CD4-positive, alpha-beta T cell (primary cell): ENCODE measurements at regions of chr1 and their contacts with region 1.

Region 1: DNA sequence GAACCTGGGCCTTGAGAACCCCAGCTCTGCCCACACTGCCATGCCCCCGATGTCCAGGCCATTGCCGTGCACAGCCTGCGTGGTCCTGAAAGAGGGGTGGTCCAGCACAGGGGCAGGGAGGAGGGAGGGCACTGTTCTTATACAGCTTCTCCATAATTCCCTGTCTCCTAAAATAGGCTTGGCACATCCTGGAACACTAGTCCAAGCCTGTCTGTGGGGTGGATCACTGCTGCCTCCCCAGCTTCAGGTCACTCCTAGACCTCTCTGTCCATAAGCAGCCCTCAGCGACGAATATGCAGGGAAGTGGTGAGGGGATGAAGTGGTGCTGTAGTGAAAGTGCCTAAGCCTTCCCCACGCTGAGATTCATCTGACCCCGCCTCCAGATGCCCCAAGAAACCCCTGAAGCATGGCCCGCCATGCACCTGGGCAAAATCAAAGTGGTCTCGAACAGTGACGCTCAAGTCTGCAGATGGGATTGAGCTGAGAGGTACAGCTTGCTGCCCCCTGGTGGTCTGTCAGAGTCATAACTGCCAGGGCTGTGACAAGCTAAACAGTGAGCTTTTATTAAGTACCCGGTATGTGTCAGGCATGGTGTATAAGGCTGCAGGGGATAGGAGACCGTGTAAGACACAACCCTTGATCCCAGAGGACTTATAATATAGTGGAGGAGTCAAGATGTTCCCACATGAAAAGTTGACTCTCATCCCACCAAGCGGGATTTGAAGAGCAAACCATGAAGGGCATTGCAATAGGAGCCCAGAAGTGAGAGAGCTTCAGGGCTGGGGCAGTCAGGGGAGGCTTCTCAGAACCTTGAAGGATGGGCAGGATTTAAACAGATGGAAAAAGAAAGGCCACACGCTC is 66.6 kb downstream of the FAM163A start:
- DNase-seq: peak; percentile 52 to 89 (median 60)
- ATAC-seq: peak; percentile 80
- H3K4me3 ChIP-seq: no peak overlapping the region
- H3K4me3 Mint-ChIP-seq: no peak overlapping the region
- H3K27ac ChIP-seq: no peak overlapping the region
- H3K27ac Mint-ChIP-seq: peak overlapping the region; percentile 8
- H3K4me1 ChIP-seq: peaks cover 13% of the 10 kb centered on the region
- H3K4me1 Mint-ChIP-seq: peaks cover 9% of the 10 kb centered on the region
- H3K27me3 ChIP-seq: no peaks in the 10 kb centered on the region
- H3K27me3 Mint-ChIP-seq: peaks cover 5% of the 10 kb centered on the region
- CTCF ChIP-seq: peak; percentile 88

Region 2: DNA sequence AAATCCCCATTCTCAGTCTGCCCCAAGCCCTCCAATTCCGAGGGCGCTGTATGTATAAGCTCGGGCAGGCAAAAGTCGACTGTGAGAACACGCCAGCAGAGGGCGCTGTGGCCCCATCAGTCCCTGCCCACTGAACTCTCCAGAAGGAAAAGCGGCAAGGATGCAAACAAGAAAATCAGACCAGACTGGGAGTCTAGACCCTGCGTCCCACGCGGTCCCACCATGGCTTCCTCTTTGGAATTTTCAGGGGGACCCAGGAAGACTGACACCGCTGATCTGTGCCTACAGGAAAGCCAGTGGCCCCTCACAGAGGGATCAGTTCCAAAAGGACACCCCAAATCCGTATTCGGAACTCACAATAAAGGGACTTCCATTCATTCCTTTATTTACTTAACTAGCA is 1277.3 kb before region 1 on chr1:
- CTCF ChIA-PET with region 1: no interaction called
- POLR2A ChIA-PET with region 1: no interaction called
- intact Hi-C with region 1: loop called in 1 of 2 experiments (anchors 10 kb)
- DNase-seq: peak; percentile 49 to 86 (median 68)
- ATAC-seq: peak; percentile 75
- H3K4me3 ChIP-seq: no peak overlapping the region
- H3K4me3 Mint-ChIP-seq: no peak overlapping the region
- H3K27ac ChIP-seq: no peak overlapping the region
- H3K27ac Mint-ChIP-seq: no peak overlapping the region
- H3K4me1 ChIP-seq: peaks cover 7% of the 10 kb centered on the region
- H3K4me1 Mint-ChIP-seq: peaks cover 5% of the 10 kb centered on the region
- H3K27me3 ChIP-seq: no peaks in the 10 kb centered on the region
- H3K27me3 Mint-ChIP-seq: peaks cover 5% of the 10 kb centered on the region
- CTCF ChIP-seq: peak; percentile 95

Region 3: DNA sequence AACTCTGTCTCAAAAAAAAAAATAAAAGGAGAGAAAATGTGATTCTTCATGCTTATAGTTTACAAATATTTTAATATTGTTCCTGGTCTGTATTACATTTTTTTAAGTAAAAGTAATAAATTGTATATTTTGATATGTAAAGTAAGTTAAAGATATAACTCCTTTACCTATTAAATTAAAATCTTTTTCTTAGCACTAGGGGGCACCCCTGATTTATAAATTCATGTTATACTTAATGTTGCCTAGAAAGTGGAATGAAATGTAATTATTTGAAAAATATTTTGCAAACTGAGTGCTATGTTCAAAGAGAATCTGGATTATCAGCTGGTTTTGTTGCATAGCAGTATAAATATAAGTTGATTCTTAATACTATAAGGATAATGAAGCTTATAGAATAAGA is 1035.5 kb before region 1 on chr1:
- CTCF ChIA-PET with region 1: interaction called, 3 read pairs
- POLR2A ChIA-PET with region 1: no interaction called
- intact Hi-C with region 1: loop called in 1 of 2 experiments (anchors 5 kb)
- DNase-seq: peak in 3 of 14 experiments; percentile 22 to 42 (median 26)
- ATAC-seq: no peak
- H3K4me3 ChIP-seq: no peak overlapping the region
- H3K4me3 Mint-ChIP-seq: no peak overlapping the region
- H3K27ac ChIP-seq: no peak overlapping the region
- H3K27ac Mint-ChIP-seq: no peak overlapping the region
- H3K4me1 ChIP-seq: no peaks in the 10 kb centered on the region
- H3K4me1 Mint-ChIP-seq: no peaks in the 10 kb centered on the region
- H3K27me3 ChIP-seq: no peaks in the 10 kb centered on the region
- H3K27me3 Mint-ChIP-seq: no peaks in the 10 kb centered on the region
- CTCF ChIP-seq: peak; percentile 54

Region 4: GRCh38 chr1:179229214-179230140 is 580.3 kb before region 1 on chr1 and contains the start of gene ABL2:
- CTCF ChIA-PET with region 1: no interaction called
- POLR2A ChIA-PET with region 1: no interaction called
- intact Hi-C with region 1: loop called in 1 of 2 experiments (anchors 10 kb)
- DNase-seq: peak; percentile 11 to 74 (median 45)
- ATAC-seq: peak; percentile 63
- H3K4me3 ChIP-seq: peak within 1 kb of the TSS; percentile 57
- H3K4me3 Mint-ChIP-seq: peak within 1 kb of the TSS; percentile 98
- H3K27ac ChIP-seq: peak within 1 kb of the TSS in 1 of 2 donors; percentile 57
- H3K27ac Mint-ChIP-seq: peak within 1 kb of the TSS; percentile 82
- H3K4me1 ChIP-seq: peaks cover 11% of the 10 kb centered on the region
- H3K4me1 Mint-ChIP-seq: peaks cover 35% of the 10 kb centered on the region
- H3K27me3 ChIP-seq: no peaks in the 10 kb centered on the region
- H3K27me3 Mint-ChIP-seq: no peaks in the 10 kb centered on the region
- CTCF ChIP-seq: no peak
- total RNA-seq, gene ABL2: 15.8 to 16.4 TPM

Region 5: GRCh38 chr1:179706339-179706941 is 103.3 kb before region 1 on chr1:
- CTCF ChIA-PET with region 1: interaction called, 77 read pairs
- POLR2A ChIA-PET with region 1: interaction called, 18 read pairs
- intact Hi-C with region 1: loop called (anchors 1 kb)
- DNase-seq: peak; percentile 29 to 85 (median 54)
- ATAC-seq: no peak
- H3K4me3 ChIP-seq: no peak overlapping the region
- H3K4me3 Mint-ChIP-seq: no peak overlapping the region
- H3K27ac ChIP-seq: no peak overlapping the region
- H3K27ac Mint-ChIP-seq: peak overlapping the region; percentile 70
- H3K4me1 ChIP-seq: peaks cover 15% of the 10 kb centered on the region
- H3K4me1 Mint-ChIP-seq: peaks cover 25% of the 10 kb centered on the region
- H3K27me3 ChIP-seq: no peaks in the 10 kb centered on the region
- H3K27me3 Mint-ChIP-seq: no peaks in the 10 kb centered on the region
- CTCF ChIP-seq: peak; percentile 80

Region 6: GRCh38 chr1:179856296-179856695 is 46.6 kb after region 1 on chr1:
- CTCF ChIA-PET with region 1: no interaction called
- POLR2A ChIA-PET with region 1: no interaction called
- intact Hi-C with region 1: no loop called
- DNase-seq: no peak
- ATAC-seq: no peak
- H3K4me3 ChIP-seq: no peak overlapping the region
- H3K4me3 Mint-ChIP-seq: no peak overlapping the region
- H3K27ac ChIP-seq: no peak overlapping the region
- H3K27ac Mint-ChIP-seq: no peak overlapping the region
- H3K4me1 ChIP-seq: no peaks in the 10 kb centered on the region
- H3K4me1 Mint-ChIP-seq: no peaks in the 10 kb centered on the region
- H3K27me3 ChIP-seq: no peaks in the 10 kb centered on the region
- H3K27me3 Mint-ChIP-seq: no peaks in the 10 kb centered on the region
- CTCF ChIP-seq: no peak

Region 7: GRCh38 chr1:179882243-179883039 is 72.7 kb after region 1 on chr1 and contains the start of gene TOR1AIP1:
- CTCF ChIA-PET with region 1: interaction called, 9 read pairs
- POLR2A ChIA-PET with region 1: interaction called, 52 read pairs
- intact Hi-C with region 1: loop called in 1 of 2 experiments (anchors 10 kb)
- DNase-seq: peak; percentile 95 to 99 (median 96)
- ATAC-seq: peak; percentile 73
- H3K4me3 ChIP-seq: peak within 1 kb of the TSS; percentile 83
- H3K4me3 Mint-ChIP-seq: peak within 1 kb of the TSS; percentile 98
- H3K27ac ChIP-seq: peak within 1 kb of the TSS; percentile 99
- H3K27ac Mint-ChIP-seq: peak within 1 kb of the TSS; percentile 100
- H3K4me1 ChIP-seq: peaks cover 26% of the 10 kb centered on the region
- H3K4me1 Mint-ChIP-seq: peaks cover 60% of the 10 kb centered on the region
- H3K27me3 ChIP-seq: no peaks in the 10 kb centered on the region
- H3K27me3 Mint-ChIP-seq: no peaks in the 10 kb centered on the region
- CTCF ChIP-seq: peak; percentile 16
- total RNA-seq, gene TOR1AIP1: 93.8 to 94.4 TPM

Region 8: DNA sequence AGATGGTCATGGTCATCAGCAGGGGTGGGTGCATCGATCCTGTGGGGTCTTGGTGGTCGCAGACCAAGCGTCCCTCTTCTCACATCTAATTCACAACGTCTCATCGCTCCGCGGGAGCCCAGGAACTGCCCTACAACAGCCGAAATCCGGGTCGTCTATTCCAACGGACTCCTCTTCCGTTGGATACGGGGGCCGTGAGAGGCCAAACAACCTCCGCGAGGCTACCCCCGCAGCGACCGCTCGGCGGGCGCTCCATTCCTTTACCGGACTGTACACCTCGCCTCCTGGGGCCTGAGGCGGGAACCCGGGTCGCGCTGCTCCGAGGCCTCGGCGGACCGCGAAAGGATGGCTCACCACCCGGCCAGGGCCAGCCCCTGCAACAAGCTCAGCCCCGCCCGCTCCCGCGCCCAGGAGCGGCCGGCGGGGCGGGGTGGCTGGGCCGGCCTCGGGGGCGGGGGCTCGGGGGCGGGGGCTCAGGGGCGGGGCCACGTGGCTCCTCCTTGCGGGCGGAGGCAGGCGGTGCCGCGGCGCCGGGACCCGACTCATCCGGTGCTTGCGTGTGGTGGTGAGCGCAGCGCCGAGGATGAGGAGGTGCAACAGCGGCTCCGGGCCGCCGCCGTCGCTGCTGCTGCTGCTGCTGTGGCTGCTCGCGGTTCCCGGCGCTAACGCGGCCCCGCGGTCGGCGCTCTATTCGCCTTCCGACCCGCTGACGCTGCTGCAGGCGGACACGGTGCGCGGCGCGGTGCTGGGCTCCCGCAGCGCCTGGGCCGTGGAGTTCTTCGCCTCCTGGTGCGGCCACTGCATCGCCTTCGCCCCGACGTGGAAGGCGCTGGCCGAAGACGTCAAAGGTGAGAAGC is 344.8 kb after region 1 on chr1 and contains the start of gene QSOX1:
- CTCF ChIA-PET with region 1: interaction called, 3 read pairs
- POLR2A ChIA-PET with region 1: interaction called, 4 read pairs
- intact Hi-C with region 1: loop called in 1 of 2 experiments (anchors 5 kb)
- DNase-seq: peak; percentile 80 to 97 (median 86)
- ATAC-seq: peak; percentile 97
- H3K4me3 ChIP-seq: peak within 1 kb of the TSS; percentile 90
- H3K4me3 Mint-ChIP-seq: peak within 1 kb of the TSS; percentile 95
- H3K27ac ChIP-seq: peak within 1 kb of the TSS; percentile 19 to 42
- H3K27ac Mint-ChIP-seq: peak within 1 kb of the TSS; percentile 82
- H3K4me1 ChIP-seq: peaks cover 27% of the 10 kb centered on the region
- H3K4me1 Mint-ChIP-seq: peaks cover 33% of the 10 kb centered on the region
- H3K27me3 ChIP-seq: no peaks in the 10 kb centered on the region
- H3K27me3 Mint-ChIP-seq: no peaks in the 10 kb centered on the region
- CTCF ChIP-seq: no peak
- total RNA-seq, gene QSOX1: 13.7 to 14.3 TPM